ENCODE measurements at regions of chr20 and their contacts with region 1.

Region 1: DNA sequence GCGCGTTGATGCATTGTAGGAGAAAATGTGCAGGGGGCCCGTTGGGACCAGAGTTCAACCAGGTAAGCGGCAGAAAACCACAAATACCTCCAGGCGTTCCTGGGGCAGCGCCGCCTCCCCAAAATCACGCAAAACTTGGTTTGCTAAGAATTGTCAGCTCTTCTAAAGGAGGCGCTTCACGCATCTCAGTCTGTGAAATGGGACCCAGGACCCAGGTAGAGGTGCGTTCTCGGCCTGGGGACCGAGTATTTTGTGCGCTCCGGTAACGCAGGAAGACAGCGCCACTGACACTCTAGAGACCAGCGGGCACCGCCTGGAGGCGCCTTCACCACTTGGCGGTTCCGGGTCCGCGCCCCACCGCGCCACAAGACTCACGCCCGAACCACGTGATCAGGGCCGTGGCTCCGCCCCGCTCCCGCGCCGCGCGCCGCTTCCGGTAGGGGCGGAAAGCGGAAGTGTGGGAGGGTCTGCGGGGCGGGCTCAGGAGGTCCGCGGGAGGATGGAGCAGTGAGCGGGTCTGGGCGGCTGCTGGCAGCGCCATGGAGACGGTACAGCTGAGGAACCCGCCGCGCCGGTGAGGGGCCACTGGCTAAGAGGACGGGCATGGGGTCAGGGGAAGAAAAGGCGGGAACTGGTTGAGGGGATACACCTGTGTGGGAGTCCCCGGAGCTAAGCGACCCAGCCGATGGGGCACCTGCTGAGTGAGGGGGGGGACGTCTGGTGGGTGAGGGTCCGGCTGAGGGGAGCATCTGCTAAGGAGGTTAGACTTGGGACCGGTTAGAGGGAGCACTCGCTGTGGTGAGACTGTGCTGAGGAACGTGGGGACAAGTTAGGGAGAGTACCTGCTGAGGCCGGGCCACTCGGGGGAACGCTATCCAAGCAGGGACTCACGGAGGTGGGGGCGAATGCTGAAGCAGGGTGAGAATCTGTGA is at the start of gene STK4:
- DNase-seq: peak; percentile 76 to 95
- ATAC-seq: peak; percentile 94 to 97
- H3K4me3 ChIP-seq: peak within 1 kb of the TSS; percentile 91
- H3K27ac ChIP-seq: peak within 1 kb of the TSS; percentile 78 to 92
- H3K4me1 ChIP-seq: peaks cover 37% of the 10 kb centered on the region
- CTCF ChIP-seq: peak; percentile 47; the same call in 2 of the 3 replicates
- EP300 ChIP-seq: no peak
- POLR2A ChIP-seq: peak; percentile 75
- RAD21 ChIP-seq: peak in 1 of 2 experiments; percentile 18; a peak in 1 of 5 replicates
- polyA plus RNA-seq, gene STK4: 27.8 and 34.5 TPM in 2 replicates

Region 2: DNA sequence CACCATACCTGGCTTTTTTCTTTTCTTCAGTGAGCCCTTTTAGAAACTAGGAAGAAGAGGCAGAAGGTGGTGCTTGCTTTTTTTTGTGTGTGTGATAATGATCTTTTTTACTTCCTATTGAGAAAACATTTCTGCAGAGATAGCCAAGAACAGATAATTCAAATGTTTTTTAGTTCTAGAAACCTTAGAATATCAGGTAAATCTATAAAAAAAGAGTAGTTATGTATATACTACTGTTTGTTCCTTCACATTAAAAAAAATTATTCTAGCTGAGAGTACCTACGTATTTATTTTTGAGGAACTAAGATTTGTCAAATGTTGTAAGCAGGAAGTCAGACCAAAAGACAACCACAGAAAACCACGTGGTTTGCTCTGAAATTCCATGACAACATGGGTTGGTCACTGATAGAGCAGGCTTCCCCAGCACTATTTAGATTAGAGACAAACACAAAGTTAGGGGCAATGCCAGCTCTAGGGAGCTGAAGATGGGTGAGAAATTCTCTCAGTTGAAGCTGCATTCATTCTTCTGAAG is 12.9 kb after region 1 on chr20:
- CTCF ChIA-PET with region 1: interaction called, 25 read pairs
- POLR2A ChIA-PET with region 1: interaction called, 3 read pairs
- DNase-seq: no peak
- ATAC-seq: no peak
- H3K4me3 ChIP-seq: no peak overlapping the region
- H3K27ac ChIP-seq: no peak overlapping the region
- H3K4me1 ChIP-seq: no peaks in the 10 kb centered on the region
- CTCF ChIP-seq: no peak
- EP300 ChIP-seq: no peak
- POLR2A ChIP-seq: no peak
- RAD21 ChIP-seq: no peak